WTC11 (cell line): ENCODE measurements at regions of chr9 and their contacts with region 1.

Region 1: GRCh38 chr9:121545875-121546423 is 46.3 kb upstream of the GGTA1 start:
- DNase-seq: peak; percentile 98
- ATAC-seq: peak; percentile 93
- H3K4me3 Mint-ChIP-seq: peak overlapping the region; percentile 33; the same call in 1 of the 2 replicates
- H3K27ac Mint-ChIP-seq: no peak overlapping the region
- H3K4me1 Mint-ChIP-seq: peaks cover 8% of the 10 kb centered on the region
- H3K27me3 Mint-ChIP-seq: peaks cover 17% of the 10 kb centered on the region
- CTCF ChIP-seq: peak; percentile 85

Region 2: GRCh38 chr9:120642129-120642770 is 903.7 kb before region 1 on chr9:
- CTCF ChIA-PET with region 1: no interaction called
- POLR2A ChIA-PET with region 1: no interaction called
- DNase-seq: no peak
- ATAC-seq: no peak
- H3K4me3 Mint-ChIP-seq: no peak overlapping the region
- H3K27ac Mint-ChIP-seq: no peak overlapping the region
- H3K4me1 Mint-ChIP-seq: no peaks in the 10 kb centered on the region
- H3K27me3 Mint-ChIP-seq: no peaks in the 10 kb centered on the region; the same call in 1 of the 2 replicates
- CTCF ChIP-seq: no peak

Region 3: GRCh38 chr9:121573717-121574485 is 28.0 kb after region 1 on chr9:
- CTCF ChIA-PET with region 1: interaction called, 17 read pairs
- POLR2A ChIA-PET with region 1: no interaction called
- DNase-seq: no peak
- ATAC-seq: no peak
- H3K4me3 Mint-ChIP-seq: no peak overlapping the region
- H3K27ac Mint-ChIP-seq: no peak overlapping the region
- H3K4me1 Mint-ChIP-seq: peaks cover 3% of the 10 kb centered on the region; the same call in 1 of the 2 replicates
- H3K27me3 Mint-ChIP-seq: no peaks in the 10 kb centered on the region
- CTCF ChIP-seq: no peak

Region 4: GRCh38 chr9:121609845-121610570 is 64.1 kb after region 1 on chr9:
- CTCF ChIA-PET with region 1: interaction called, 15 read pairs
- POLR2A ChIA-PET with region 1: no interaction called
- DNase-seq: no peak
- ATAC-seq: no peak
- H3K4me3 Mint-ChIP-seq: no peak overlapping the region
- H3K27ac Mint-ChIP-seq: no peak overlapping the region
- H3K4me1 Mint-ChIP-seq: peaks cover 36% of the 10 kb centered on the region
- H3K27me3 Mint-ChIP-seq: no peaks in the 10 kb centered on the region
- CTCF ChIP-seq: no peak

Region 5: GRCh38 chr9:121679901-121680635 is 134.1 kb after region 1 on chr9:
- CTCF ChIA-PET with region 1: interaction called, 27 read pairs
- POLR2A ChIA-PET with region 1: no interaction called
- DNase-seq: no peak
- ATAC-seq: no peak
- H3K4me3 Mint-ChIP-seq: no peak overlapping the region
- H3K27ac Mint-ChIP-seq: no peak overlapping the region
- H3K4me1 Mint-ChIP-seq: peaks cover 4% of the 10 kb centered on the region
- H3K27me3 Mint-ChIP-seq: no peaks in the 10 kb centered on the region
- CTCF ChIP-seq: no peak

Region 6: DNA sequence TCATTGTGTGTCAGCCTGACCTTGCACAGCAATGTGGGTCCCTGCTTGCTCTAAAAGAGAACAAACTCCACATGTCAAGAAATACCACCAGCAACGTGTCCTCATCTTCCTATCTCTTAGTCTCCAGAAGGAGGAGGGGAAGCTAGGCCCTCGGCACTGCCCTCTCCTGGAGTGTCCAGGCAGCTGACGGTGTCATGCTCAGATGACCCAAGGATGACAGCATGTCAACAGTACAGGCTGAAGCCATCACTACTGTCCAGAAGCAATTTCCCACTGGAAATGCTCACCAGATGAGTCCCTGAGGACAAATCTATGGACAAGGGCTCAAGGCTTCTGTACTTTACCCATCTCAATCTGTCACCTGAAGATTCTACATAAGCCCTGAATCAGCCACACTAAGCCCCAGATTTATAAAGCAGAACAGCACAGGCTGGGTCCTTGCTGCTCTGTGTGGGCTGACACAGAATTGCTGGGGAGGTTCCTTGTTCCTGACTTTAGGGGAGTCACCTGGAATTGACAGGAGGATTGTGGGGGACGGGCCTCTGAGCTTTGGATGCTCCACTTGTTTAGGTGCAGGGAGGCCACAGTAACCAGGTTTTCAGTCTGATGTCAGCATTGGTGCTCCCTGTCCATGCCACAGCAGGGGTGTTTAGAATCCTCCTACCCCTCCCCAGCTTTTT is 315.7 kb after region 1 on chr9:
- CTCF ChIA-PET with region 1: interaction called, 15 read pairs
- POLR2A ChIA-PET with region 1: no interaction called
- DNase-seq: peak; percentile 64
- ATAC-seq: peak; percentile 82
- H3K4me3 Mint-ChIP-seq: no peak overlapping the region
- H3K27ac Mint-ChIP-seq: no peak overlapping the region
- H3K4me1 Mint-ChIP-seq: peaks cover 42% of the 10 kb centered on the region
- H3K27me3 Mint-ChIP-seq: no peaks in the 10 kb centered on the region
- CTCF ChIP-seq: peak; percentile 28; the same call in 1 of the 2 replicates